Activated CD4-positive, alpha-beta T cell treated with anti-CD3 and anti-CD28 coated beads for 36 hours (primary cell): ENCODE measurements at regions of chr3 and their contacts with region 1.

Region 1: GRCh38 chr3:128075516-128076482 is 23.6 kb downstream of the SEC61A1 start:
- DNase-seq: peak; percentile 91
- ATAC-seq: peak; percentile 88
- H3K4me3 Mint-ChIP-seq: peak overlapping the region; percentile 44
- H3K27ac Mint-ChIP-seq: no peak overlapping the region
- H3K4me1 Mint-ChIP-seq: peaks cover 21% of the 10 kb centered on the region
- H3K27me3 Mint-ChIP-seq: no peaks in the 10 kb centered on the region

Region 2: DNA sequence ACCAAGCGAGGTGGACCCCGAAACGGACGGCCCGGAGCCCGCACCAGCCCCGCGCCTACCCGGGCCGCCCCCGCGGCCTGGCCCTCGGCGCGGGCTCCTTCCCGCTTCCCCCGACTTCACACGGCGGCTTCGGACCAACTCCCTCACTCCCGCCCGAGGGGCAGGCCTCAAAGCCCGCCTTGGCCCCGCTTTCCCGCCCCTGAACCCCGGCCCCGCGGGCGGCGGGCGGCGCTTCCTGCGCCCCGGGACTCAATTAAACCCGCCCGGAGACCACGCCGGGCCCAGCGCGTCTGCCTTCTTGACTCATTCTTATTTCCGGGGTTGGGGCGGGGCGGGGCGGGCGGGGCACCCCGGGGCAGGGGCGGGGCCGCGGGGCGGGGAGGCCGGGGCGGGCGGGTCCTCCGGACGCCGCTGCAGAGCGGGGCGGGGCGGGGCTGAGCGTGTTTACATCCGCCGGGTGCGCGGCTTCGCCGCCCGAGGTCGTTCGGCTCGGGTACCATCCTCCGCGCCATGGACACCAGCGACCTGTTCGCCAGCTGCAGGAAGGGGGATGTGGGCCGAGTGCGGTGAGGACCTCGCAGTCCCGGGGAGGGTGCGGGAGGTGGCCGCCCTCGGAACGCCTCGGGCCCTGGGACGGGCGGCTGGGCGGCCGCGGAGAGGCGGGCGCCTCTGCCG is 403.1 kb before region 1 on chr3 and contains the start of gene ABTB1:
- CTCF ChIA-PET with region 1: interaction called, 5 read pairs
- POLR2A ChIA-PET with region 1: no interaction called
- intact Hi-C with region 1: loop called in 1 of 2 experiments (anchors 1 kb)
- DNase-seq: peak; percentile 94
- ATAC-seq: peak; percentile 90
- H3K4me3 Mint-ChIP-seq: peak within 1 kb of the TSS; percentile 88
- H3K27ac Mint-ChIP-seq: peak within 1 kb of the TSS; percentile 96
- H3K4me1 Mint-ChIP-seq: peaks cover 22% of the 10 kb centered on the region
- H3K27me3 Mint-ChIP-seq: no peaks in the 10 kb centered on the region
- total RNA-seq, gene ABTB1: 8.3 to 9.6 TPM

Region 3: GRCh38 chr3:128133273-128134084 is 57.7 kb after region 1 on chr3:
- CTCF ChIA-PET with region 1: interaction called, 5 read pairs
- POLR2A ChIA-PET with region 1: no interaction called
- intact Hi-C with region 1: loop called in 1 of 2 experiments (anchors 2 kb)
- DNase-seq: peak; percentile 55
- ATAC-seq: no peak
- H3K4me3 Mint-ChIP-seq: no peak overlapping the region
- H3K27ac Mint-ChIP-seq: no peak overlapping the region
- H3K4me1 Mint-ChIP-seq: no peaks in the 10 kb centered on the region
- H3K27me3 Mint-ChIP-seq: no peaks in the 10 kb centered on the region

Region 4: GRCh38 chr3:128316481-128316891 is 240.7 kb after region 1 on chr3:
- CTCF ChIA-PET with region 1: no interaction called
- POLR2A ChIA-PET with region 1: no interaction called
- intact Hi-C with region 1: loop called (anchors 5 kb)
- DNase-seq: peak; percentile 73
- ATAC-seq: peak; percentile 93
- H3K4me3 Mint-ChIP-seq: peak overlapping the region; percentile 0
- H3K27ac Mint-ChIP-seq: peak overlapping the region; percentile 79
- H3K4me1 Mint-ChIP-seq: peaks cover 67% of the 10 kb centered on the region
- H3K27me3 Mint-ChIP-seq: no peaks in the 10 kb centered on the region

Region 5: DNA sequence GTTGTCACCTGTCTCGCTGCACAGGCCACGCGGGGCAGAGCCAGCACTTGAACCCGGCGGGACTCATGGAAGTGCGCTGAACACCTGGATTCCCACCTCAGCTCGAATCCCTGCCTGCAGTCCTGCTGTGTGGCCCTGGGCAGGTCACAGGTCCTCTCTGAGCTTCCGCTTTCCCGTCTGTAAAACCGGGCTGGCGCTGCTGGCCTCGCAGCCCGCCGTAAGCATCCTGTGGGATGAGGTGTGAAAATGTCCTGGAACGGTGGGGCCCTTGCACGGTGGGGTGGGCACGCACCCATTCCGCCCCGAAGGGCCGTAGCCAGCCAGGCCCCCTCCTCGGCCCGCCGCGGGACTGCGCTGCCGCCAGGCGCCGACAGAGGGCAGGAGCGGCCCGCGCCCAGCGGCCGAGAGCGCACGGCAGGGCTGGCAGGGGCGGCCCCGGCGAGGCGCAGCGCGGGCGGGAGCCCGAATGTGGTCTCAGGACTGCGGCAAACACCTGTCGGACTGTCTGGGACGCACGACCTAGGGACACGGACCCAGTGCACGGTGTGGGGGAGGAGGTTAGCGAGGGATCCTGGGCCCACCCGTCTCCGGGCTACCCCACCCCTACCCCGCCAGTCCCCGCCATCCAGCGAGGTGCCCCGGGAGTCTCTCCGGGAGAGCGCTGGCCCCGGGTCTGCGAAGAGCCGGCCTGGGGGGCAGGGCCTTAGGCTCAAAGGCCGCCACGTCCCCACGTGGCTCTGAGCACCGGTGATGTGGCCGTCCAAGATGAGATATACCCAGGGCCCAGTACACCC is 350.5 kb after region 1 on chr3:
- CTCF ChIA-PET with region 1: no interaction called
- POLR2A ChIA-PET with region 1: no interaction called
- intact Hi-C with region 1: loop called in 1 of 2 experiments (anchors 5 kb)
- DNase-seq: peak; percentile 75
- ATAC-seq: peak; percentile 91
- H3K4me3 Mint-ChIP-seq: no peak overlapping the region
- H3K27ac Mint-ChIP-seq: no peak overlapping the region
- H3K4me1 Mint-ChIP-seq: no peaks in the 10 kb centered on the region
- H3K27me3 Mint-ChIP-seq: peaks cover 18% of the 10 kb centered on the region

Region 6: GRCh38 chr3:128497387-128498126 is 421.8 kb after region 1 on chr3:
- CTCF ChIA-PET with region 1: interaction called, 6 read pairs
- POLR2A ChIA-PET with region 1: no interaction called
- intact Hi-C with region 1: loop called (anchors 2 to 5 kb)
- DNase-seq: peak; percentile 85
- ATAC-seq: peak; percentile 78
- H3K4me3 Mint-ChIP-seq: peak overlapping the region; percentile 61
- H3K27ac Mint-ChIP-seq: no peak overlapping the region
- H3K4me1 Mint-ChIP-seq: no peaks in the 10 kb centered on the region
- H3K27me3 Mint-ChIP-seq: peaks cover 42% of the 10 kb centered on the region